ENCODE measurements at regions of chr11 and their contacts with region 1.

Region 1: GRCh38 chr11:58567889-58568512 is 7.7 kb downstream of the LPXN start:
- DNase-seq: peak; percentile 48 to 79 (median 75)
- ATAC-seq: peak; percentile 99
- H3K4me3 ChIP-seq: no peak overlapping the region
- H3K4me3 Mint-ChIP-seq: peak overlapping the region; percentile 20 to 71 (median 62)
- H3K27ac ChIP-seq: no peak overlapping the region
- H3K27ac Mint-ChIP-seq: peak overlapping the region in 8 of 9 donors; percentile 0 to 89 (median 49)
- H3K4me1 ChIP-seq: peaks cover 24 to 53% of the 10 kb centered on the region in 2 donors
- H3K4me1 Mint-ChIP-seq: peaks cover 43 to 79% (median 58%) of the 10 kb centered on the region in 7 donors
- H3K27me3 ChIP-seq: no peaks in the 10 kb centered on the region
- H3K27me3 Mint-ChIP-seq: no peaks in the 10 kb centered on the region

Region 2: GRCh38 chr11:58524232-58525036 is 43.6 kb before region 1 on chr11:
- CTCF ChIA-PET with region 1: interaction called, 27 read pairs
- POLR2A ChIA-PET with region 1: interaction called, 140 read pairs
- intact Hi-C with region 1: no loop called
- DNase-seq: peak in 8 of 9 donors; percentile 39 to 78 (median 70)
- ATAC-seq: peak; percentile 78
- H3K4me3 ChIP-seq: peak overlapping the region; percentile 10
- H3K4me3 Mint-ChIP-seq: peak overlapping the region; percentile 65 to 85 (median 80)
- H3K27ac ChIP-seq: peak overlapping the region; percentile 75
- H3K27ac Mint-ChIP-seq: peak overlapping the region; percentile 84 to 99 (median 97)
- H3K4me1 ChIP-seq: peaks cover 18 to 50% of the 10 kb centered on the region in 2 donors
- H3K4me1 Mint-ChIP-seq: peaks cover 27 to 90% (median 54%) of the 10 kb centered on the region in 7 donors
- H3K27me3 ChIP-seq: no peaks in the 10 kb centered on the region
- H3K27me3 Mint-ChIP-seq: no peaks in the 10 kb centered on the region

Region 3: GRCh38 chr11:58549644-58550043 is 18.4 kb before region 1 on chr11:
- CTCF ChIA-PET with region 1: interaction called, 16 read pairs
- POLR2A ChIA-PET with region 1: interaction called, 5 read pairs
- intact Hi-C with region 1: loop called in 1 of 2 experiments (anchors 2 kb)
- DNase-seq: no peak
- ATAC-seq: no peak
- H3K4me3 ChIP-seq: no peak overlapping the region
- H3K4me3 Mint-ChIP-seq: no peak overlapping the region
- H3K27ac ChIP-seq: no peak overlapping the region
- H3K27ac Mint-ChIP-seq: peak overlapping the region in 1 of 9 donors; percentile 63
- H3K4me1 ChIP-seq: no peaks in the 10 kb centered on the region
- H3K4me1 Mint-ChIP-seq: peaks cover 1 to 49% (median 20%) of the 10 kb centered on the region in 7 donors
- H3K27me3 ChIP-seq: no peaks in the 10 kb centered on the region
- H3K27me3 Mint-ChIP-seq: no peaks in the 10 kb centered on the region

Region 4: GRCh38 chr11:58617976-58618557 is 50.1 kb after region 1 on chr11:
- CTCF ChIA-PET with region 1: interaction called, 16 read pairs
- POLR2A ChIA-PET with region 1: no interaction called
- intact Hi-C with region 1: loop called in 1 of 2 experiments (anchors 1 kb)
- DNase-seq: peak in 1 of 9 donors; percentile 24
- ATAC-seq: peak; percentile 60
- H3K4me3 ChIP-seq: no peak overlapping the region
- H3K4me3 Mint-ChIP-seq: no peak overlapping the region
- H3K27ac ChIP-seq: no peak overlapping the region
- H3K27ac Mint-ChIP-seq: peak overlapping the region in 8 of 9 donors; percentile 30 to 85 (median 75)
- H3K4me1 ChIP-seq: peaks cover 0 to 7% of the 10 kb centered on the region in 2 donors
- H3K4me1 Mint-ChIP-seq: peaks cover 10 to 45% (median 27%) of the 10 kb centered on the region in 7 donors
- H3K27me3 ChIP-seq: no peaks in the 10 kb centered on the region
- H3K27me3 Mint-ChIP-seq: no peaks in the 10 kb centered on the region

Region 5: GRCh38 chr11:58675334-58676155 is 107.5 kb after region 1 on chr11:
- CTCF ChIA-PET with region 1: interaction called, 3 read pairs
- POLR2A ChIA-PET with region 1: no interaction called
- intact Hi-C with region 1: loop called in 1 of 2 experiments (anchors 1 kb)
- DNase-seq: peak; percentile 37 to 75 (median 65)
- ATAC-seq: peak; percentile 83
- H3K4me3 ChIP-seq: no peak overlapping the region
- H3K4me3 Mint-ChIP-seq: no peak overlapping the region
- H3K27ac ChIP-seq: no peak overlapping the region
- H3K27ac Mint-ChIP-seq: no peak overlapping the region
- H3K4me1 ChIP-seq: no peaks in the 10 kb centered on the region
- H3K4me1 Mint-ChIP-seq: no peaks in the 10 kb centered on the region
- H3K27me3 ChIP-seq: peaks cover 0 to 4% of the 10 kb centered on the region in 2 donors
- H3K27me3 Mint-ChIP-seq: peaks cover 0 to 5% (median 0%) of the 10 kb centered on the region in 5 donors

Measured in naive thymus-derived CD4-positive, alpha-beta T cell (primary cell).